ENCODE measurements at regions of chr15 and their contacts with region 1.

Region 1: DNA sequence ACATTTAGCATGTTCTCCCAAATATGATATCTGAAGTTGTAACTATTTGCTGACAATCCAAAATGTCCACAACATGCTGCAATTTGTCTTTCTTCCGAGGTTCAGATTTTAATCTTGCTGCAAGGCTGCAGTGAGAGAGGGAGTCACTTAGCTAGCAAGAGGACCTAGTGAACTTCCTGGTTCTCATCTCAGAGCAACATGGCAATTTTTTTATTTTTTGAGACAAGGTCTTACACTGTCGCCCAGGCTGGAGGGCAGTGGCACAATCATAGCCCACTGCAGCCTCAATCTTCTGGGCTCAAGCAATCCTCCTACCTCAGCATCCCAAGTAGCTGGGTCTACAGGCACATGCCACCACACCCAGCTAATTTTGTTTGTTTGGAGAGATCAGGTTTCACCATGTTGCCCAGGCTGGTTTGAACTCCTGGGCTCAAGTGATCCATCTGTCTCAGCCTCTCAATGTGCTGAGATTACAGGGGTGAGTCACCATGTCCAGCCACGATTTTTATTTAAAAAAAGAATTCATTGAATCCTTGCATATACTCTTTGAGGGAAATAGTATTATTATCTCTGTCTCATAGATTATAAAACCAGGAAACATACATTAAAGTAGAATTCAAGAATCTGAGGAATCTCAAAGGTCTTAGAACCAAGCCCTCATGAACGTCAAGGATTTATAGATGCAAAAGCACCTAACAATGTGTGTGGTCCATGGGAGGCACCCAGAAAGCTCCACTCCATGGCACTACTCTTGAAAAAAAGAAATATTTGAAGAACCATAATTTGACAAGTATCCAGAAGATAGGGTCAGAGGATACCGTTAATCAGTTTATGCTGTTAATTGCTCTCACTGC is 9.1 kb downstream of the HDC start:
- DNase-seq: peak; percentile 32
- ATAC-seq: no peak
- H3K4me3 Mint-ChIP-seq: no peak overlapping the region
- H3K27ac Mint-ChIP-seq: no peak overlapping the region
- H3K4me1 Mint-ChIP-seq: peaks cover 56% of the 10 kb centered on the region
- H3K27me3 Mint-ChIP-seq: no peaks in the 10 kb centered on the region

Region 2: DNA sequence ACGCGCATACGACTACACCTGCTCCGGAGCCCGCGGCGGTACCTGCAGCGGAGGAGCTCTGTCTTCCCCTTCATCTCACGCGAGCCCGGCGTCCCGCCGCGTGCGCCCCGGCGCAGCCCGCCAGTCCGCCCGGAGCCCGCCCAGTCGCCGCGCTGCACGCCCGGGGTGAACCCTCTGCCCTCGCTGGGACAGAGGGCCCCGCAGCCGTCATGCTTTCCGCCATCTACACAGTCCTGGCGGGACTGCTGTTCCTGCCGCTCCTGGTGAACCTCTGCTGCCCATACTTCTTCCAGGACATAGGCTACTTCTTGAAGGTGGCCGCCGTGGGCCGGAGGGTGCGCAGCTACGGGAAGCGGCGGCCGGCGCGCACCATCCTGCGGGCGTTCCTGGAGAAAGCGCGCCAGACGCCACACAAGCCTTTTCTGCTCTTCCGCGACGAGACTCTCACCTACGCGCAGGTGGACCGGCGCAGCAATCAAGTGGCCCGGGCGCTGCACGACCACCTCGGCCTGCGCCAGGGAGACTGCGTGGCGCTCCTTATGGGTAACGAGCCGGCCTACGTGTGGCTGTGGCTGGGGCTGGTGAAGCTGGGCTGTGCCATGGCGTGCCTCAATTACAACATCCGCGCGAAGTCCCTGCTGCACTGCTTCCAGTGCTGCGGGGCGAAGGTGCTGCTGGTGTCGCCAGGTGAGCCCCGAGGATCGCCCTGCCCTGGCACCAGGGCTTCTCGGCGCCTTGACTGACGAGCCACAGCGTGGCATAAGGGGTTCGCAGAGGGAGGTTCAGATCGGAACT is 74.0 kb before region 1 on chr15:
- CTCF ChIA-PET with region 1: interaction called, 40 read pairs
- DNase-seq: peak; percentile 73
- ATAC-seq: peak; percentile 74
- H3K4me3 Mint-ChIP-seq: peak overlapping the region; percentile 96
- H3K27ac Mint-ChIP-seq: peak overlapping the region; percentile 96
- H3K4me1 Mint-ChIP-seq: peaks cover 68% of the 10 kb centered on the region
- H3K27me3 Mint-ChIP-seq: no peaks in the 10 kb centered on the region

Region 3: GRCh38 chr15:50241684-50242450 is 14.5 kb before region 1 on chr15:
- CTCF ChIA-PET with region 1: interaction called, 77 read pairs
- DNase-seq: no peak
- ATAC-seq: peak; percentile 82
- H3K4me3 Mint-ChIP-seq: no peak overlapping the region
- H3K27ac Mint-ChIP-seq: peak overlapping the region; percentile 69
- H3K4me1 Mint-ChIP-seq: peaks cover 31% of the 10 kb centered on the region
- H3K27me3 Mint-ChIP-seq: no peaks in the 10 kb centered on the region

Measured in activated CD8-positive, alpha-beta memory T cell treated with anti-CD3 and anti-CD28 coated beads, Interleukin-2, amount 10 ng/mL, durations not matched to agents 7 days and 5 days (primary cell).